Activated naive CD8-positive, alpha-beta T cell treated with anti-CD3 and anti-CD28 coated beads, Interleukin-2, amount 10 ng/mL, durations not matched to agents 7 days and 5 days (primary cell): ENCODE measurements at regions of chr1 and their contacts with region 1.

Region 1: GRCh38 chr1:10494754-10495474 is 20.2 kb downstream of the PEX14 start:
- DNase-seq: peak; percentile 87
- ATAC-seq: peak; percentile 82
- H3K4me3 Mint-ChIP-seq: peak overlapping the region; percentile 84
- H3K27ac Mint-ChIP-seq: peak overlapping the region; percentile 87
- H3K4me1 Mint-ChIP-seq: peaks cover 43% of the 10 kb centered on the region
- H3K27me3 Mint-ChIP-seq: no peaks in the 10 kb centered on the region

Region 2: DNA sequence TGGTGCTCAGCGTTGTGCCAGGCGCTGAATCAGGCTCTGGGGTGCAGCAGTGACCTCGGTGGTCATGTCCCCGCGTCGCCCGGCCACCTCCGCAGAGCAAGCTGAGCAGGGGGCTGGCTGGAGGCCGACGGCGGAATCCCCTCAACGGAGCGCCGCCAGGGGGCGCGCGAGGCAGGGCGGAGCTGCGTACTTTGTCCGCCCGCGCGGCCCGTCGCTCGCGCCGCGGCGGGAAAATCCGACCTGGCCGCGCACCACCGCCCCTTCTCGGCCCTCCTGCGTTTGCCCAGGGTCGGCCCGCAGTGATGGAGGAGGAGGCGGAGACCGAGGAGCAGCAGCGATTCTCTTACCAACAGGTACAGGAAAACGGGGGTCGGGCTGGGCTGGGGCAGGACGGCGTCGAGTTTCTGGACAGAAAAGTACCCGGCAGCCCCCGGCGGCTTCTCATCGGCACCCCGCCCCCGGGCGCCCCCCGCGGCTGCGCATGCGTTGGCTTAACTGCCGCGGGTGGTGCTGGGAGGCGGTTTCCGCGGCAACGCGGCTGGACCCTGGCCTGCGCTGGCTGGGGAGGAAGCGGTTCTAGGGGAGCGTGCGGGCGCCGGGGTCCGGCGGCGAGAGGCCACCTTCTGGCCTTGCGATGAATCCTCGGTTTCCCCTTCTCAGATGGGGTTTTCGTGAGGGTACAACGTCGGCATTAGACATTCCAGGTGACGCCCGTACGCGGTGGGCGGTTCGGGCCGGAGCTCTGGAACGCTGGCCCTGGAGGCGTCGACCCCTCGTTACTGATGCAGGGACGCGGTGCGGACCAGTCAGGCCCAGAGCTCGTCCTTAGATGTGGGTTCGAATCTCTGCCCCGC is 64.5 kb before region 1 on chr1 and contains the start of gene CENPS:
- POLR2A ChIA-PET with region 1: interaction called, 24 read pairs
- DNase-seq: peak; percentile 98
- ATAC-seq: peak; percentile 88
- H3K4me3 Mint-ChIP-seq: peak within 1 kb of the TSS; percentile 92
- H3K27ac Mint-ChIP-seq: peak within 1 kb of the TSS; percentile 91
- H3K4me1 Mint-ChIP-seq: peaks cover 19% of the 10 kb centered on the region
- H3K27me3 Mint-ChIP-seq: no peaks in the 10 kb centered on the region
- total RNA-seq, gene CENPS: 10.0 to 11.5 TPM

Region 3: DNA sequence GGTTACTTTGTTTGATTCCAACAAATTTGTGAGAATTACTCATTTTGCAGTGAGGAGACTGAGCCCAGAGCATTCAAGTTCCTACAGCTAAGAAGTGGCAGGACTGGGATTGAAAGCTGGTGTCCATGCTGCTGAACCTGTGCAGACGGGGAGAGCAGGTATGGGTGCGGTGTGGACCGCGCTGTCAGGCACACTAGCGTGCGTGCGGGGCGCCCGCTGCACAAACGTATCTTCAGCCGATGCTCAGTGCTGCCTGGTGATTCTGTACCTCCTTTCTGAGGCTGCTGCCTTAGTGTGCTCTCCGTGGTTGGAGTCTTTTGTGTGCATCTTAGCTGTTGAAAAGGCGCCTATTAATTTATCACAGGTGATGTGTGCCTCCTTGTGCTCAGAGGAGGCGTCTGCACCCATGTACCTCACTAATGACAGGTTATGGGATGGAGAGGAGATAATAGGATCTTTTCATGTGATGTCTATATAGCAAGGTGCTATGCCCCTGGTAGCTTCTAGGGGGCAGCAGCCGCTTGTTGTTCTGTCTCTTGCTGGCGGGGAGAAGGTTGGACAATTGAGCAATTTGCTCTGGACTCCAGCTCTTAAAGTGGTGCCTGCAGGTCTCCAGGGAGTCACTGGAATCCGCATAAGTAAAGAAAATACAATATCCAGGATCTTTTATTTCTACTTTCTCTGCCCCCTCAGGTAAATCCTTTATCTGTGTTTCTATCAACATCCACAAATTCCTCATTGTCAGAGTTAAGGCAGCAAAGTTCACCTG is 12.4 kb after region 1 on chr1:
- POLR2A ChIA-PET with region 1: interaction called, 12 read pairs
- DNase-seq: peak; percentile 53
- ATAC-seq: peak; percentile 40
- H3K4me3 Mint-ChIP-seq: no peak overlapping the region
- H3K27ac Mint-ChIP-seq: no peak overlapping the region
- H3K4me1 Mint-ChIP-seq: peaks cover 40% of the 10 kb centered on the region
- H3K27me3 Mint-ChIP-seq: no peaks in the 10 kb centered on the region